ENCODE measurements at regions of chr17 and their contacts with region 1.

Region 1: GRCh38 chr17:4997302-4998026 is at the starts of genes INCA1 and KIF1C:
- DNase-seq: peak; percentile 89
- H3K4me3 Mint-ChIP-seq: peak within 1 kb of the TSS; percentile 86
- H3K27ac Mint-ChIP-seq: peak within 1 kb of the TSS; percentile 62
- H3K4me1 Mint-ChIP-seq: peaks cover 12% of the 10 kb centered on the region
- H3K27me3 Mint-ChIP-seq: no peaks in the 10 kb centered on the region
- total RNA-seq, gene INCA1: 0.43 and 0.53 TPM in 2 replicates
- total RNA-seq, gene KIF1C: 51.0 and 51.4 TPM in 2 replicates

Region 2: GRCh38 chr17:4986951-4987766 is 10.3 kb before region 1 on chr17 and contains the start of gene CAMTA2:
- intact Hi-C with region 1: loop called (anchors 1 kb)
- DNase-seq: peak; percentile 76
- H3K4me3 Mint-ChIP-seq: peak within 1 kb of the TSS; percentile 94
- H3K27ac Mint-ChIP-seq: peak within 1 kb of the TSS; percentile 86
- H3K4me1 Mint-ChIP-seq: peaks cover 37% of the 10 kb centered on the region
- H3K27me3 Mint-ChIP-seq: no peaks in the 10 kb centered on the region
- total RNA-seq, gene CAMTA2: 90.2 and 92.3 TPM in 2 replicates

Region 3: GRCh38 chr17:5031365-5032082 is 34.1 kb after region 1 on chr17:
- intact Hi-C with region 1: loop called (anchors 5 kb)
- DNase-seq: peak; percentile 71
- H3K4me3 Mint-ChIP-seq: peak overlapping the region; percentile 81
- H3K27ac Mint-ChIP-seq: peak overlapping the region; percentile 96
- H3K4me1 Mint-ChIP-seq: peaks cover 14% of the 10 kb centered on the region
- H3K27me3 Mint-ChIP-seq: no peaks in the 10 kb centered on the region